Heart left ventricle (tissue), 16 donors: ENCODE measurements at regions of chr3 and their contacts with region 1.

Region 1: DNA sequence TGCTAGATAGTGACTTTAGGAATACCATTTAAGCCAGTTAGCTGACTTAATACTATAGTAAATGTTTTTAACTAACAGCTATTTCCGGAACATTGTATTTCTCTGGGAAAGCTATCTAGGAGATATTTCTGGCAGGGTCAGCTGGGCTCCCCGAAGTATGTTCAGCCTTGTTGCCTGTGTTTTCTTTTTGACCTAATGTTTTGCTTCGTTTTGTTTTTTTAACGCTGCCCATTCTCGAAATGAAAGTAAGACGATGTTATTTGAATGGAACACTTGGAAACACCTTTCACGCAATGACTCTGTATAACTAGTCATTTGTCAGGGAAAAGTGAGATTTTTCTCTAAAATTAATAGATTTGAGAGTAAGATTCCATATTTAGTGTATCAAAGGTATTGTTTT is 702.9 kb upstream of the NAALADL2 start:
- DNase-seq: peak in 1 of 5 donors; percentile 7
- ATAC-seq: peak in 2 of 4 donors; percentile 28 to 34
- H3K4me3 ChIP-seq: peak overlapping the region in 11 of 12 donors; percentile 18 to 46 (median 39)
- H3K27ac ChIP-seq: peak overlapping the region in 5 of 12 donors; percentile 7 to 59 (median 41)
- H3K4me1 ChIP-seq: peaks cover 0 to 12% (median 0%) of the 10 kb centered on the region in 12 donors
- H3K27me3 ChIP-seq: no peaks in the 10 kb centered on the region
- CTCF ChIP-seq: no peak
- POLR2A ChIP-seq: no peak

Region 2: GRCh38 chr3:174199696-174200095 is 43.5 kb after region 1 on chr3:
- intact Hi-C with region 1: loop called in 1 of 10 experiments (anchors 2 kb)
- DNase-seq: no peak
- ATAC-seq: no peak
- H3K4me3 ChIP-seq: no peak overlapping the region
- H3K27ac ChIP-seq: no peak overlapping the region
- H3K4me1 ChIP-seq: peaks cover 0 to 13% (median 0%) of the 10 kb centered on the region in 12 donors
- H3K27me3 ChIP-seq: no peaks in the 10 kb centered on the region
- CTCF ChIP-seq: no peak
- POLR2A ChIP-seq: no peak

Region 3: GRCh38 chr3:174342941-174343501 is 186.8 kb after region 1 on chr3:
- intact Hi-C with region 1: no loop called
- DNase-seq: no peak
- ATAC-seq: peak in 1 of 4 donors; percentile 54
- H3K4me3 ChIP-seq: no peak overlapping the region
- H3K27ac ChIP-seq: no peak overlapping the region
- H3K4me1 ChIP-seq: peaks cover 0 to 4% (median 0%) of the 10 kb centered on the region in 12 donors
- H3K27me3 ChIP-seq: no peaks in the 10 kb centered on the region
- CTCF ChIP-seq: no peak
- POLR2A ChIP-seq: no peak

Region 4: GRCh38 chr3:175590745-175591144 is 1434.5 kb after region 1 on chr3:
- intact Hi-C with region 1: no loop called
- DNase-seq: no peak
- ATAC-seq: no peak
- H3K4me3 ChIP-seq: no peak overlapping the region
- H3K27ac ChIP-seq: no peak overlapping the region
- H3K4me1 ChIP-seq: no peaks in the 10 kb centered on the region
- H3K27me3 ChIP-seq: no peaks in the 10 kb centered on the region
- CTCF ChIP-seq: no peak
- POLR2A ChIP-seq: no peak